Activated CD4-positive, alpha-beta memory T cell treated with anti-CD3 and anti-CD28 coated beads, Interleukin-2, amount 10 ng/mL, durations not matched to agents 7 days and 5 days (primary cell): ENCODE measurements at regions of chr13 and their contacts with region 1.

Region 1: DNA sequence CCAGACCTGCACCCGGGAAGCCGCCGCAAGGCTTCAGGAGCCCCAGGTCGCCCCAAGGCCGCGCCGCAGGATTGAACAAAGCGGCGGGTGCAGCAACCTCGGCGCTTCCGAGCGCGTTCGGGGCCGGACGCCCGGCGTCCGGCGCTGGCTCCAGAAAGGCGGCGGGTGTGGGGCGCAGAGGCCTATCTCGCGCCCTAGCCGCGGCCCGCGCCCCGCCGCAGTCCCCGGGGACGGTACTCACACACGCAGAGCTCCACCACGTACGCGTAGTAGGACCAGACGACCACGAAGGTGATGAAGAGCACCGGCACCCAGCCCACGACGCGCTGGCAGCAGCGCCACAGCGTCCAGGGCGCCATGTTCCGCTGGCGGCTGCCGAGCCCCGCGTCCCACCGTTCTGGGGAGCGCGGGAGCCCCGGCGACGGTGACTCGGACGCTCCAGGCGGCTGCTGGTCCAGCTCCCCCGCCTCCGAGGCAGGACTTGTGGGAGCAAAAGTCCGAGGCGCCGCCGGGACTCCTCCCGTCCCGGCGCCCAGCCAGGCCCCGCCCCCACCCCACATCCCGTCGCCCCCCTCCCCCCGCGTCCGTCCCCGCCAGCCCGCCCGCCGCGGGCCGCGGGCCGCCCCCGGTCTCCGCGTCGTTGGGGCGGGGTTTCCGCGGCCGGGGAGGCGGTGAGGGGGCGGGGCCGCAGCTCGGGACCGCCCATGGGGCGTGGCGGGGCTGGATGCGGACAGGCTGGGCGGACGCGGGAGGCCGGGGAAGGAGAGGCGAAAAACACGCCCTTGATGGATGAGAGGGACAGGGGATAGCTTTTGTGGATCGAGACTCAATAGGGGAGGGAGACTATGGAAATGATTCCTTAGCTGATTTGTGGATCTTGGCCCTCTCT is at the start of gene ZDHHC20:
- DNase-seq: peak; percentile 91
- H3K4me3 Mint-ChIP-seq: peak within 1 kb of the TSS; percentile 85
- H3K27ac Mint-ChIP-seq: peak within 1 kb of the TSS; percentile 91
- H3K4me1 Mint-ChIP-seq: peaks cover 34% of the 10 kb centered on the region
- H3K27me3 Mint-ChIP-seq: no peaks in the 10 kb centered on the region
- total RNA-seq, gene ZDHHC20: 92.0 to 103 TPM

Region 2: GRCh38 chr13:21344662-21345176 is 114.3 kb before region 1 on chr13:
- CTCF ChIA-PET with region 1: no interaction called
- POLR2A ChIA-PET with region 1: interaction called, 10 read pairs
- DNase-seq: peak; percentile 64
- H3K4me3 Mint-ChIP-seq: peak overlapping the region; percentile 67
- H3K27ac Mint-ChIP-seq: peak overlapping the region; percentile 86
- H3K4me1 Mint-ChIP-seq: peaks cover 31% of the 10 kb centered on the region
- H3K27me3 Mint-ChIP-seq: no peaks in the 10 kb centered on the region

Region 3: DNA sequence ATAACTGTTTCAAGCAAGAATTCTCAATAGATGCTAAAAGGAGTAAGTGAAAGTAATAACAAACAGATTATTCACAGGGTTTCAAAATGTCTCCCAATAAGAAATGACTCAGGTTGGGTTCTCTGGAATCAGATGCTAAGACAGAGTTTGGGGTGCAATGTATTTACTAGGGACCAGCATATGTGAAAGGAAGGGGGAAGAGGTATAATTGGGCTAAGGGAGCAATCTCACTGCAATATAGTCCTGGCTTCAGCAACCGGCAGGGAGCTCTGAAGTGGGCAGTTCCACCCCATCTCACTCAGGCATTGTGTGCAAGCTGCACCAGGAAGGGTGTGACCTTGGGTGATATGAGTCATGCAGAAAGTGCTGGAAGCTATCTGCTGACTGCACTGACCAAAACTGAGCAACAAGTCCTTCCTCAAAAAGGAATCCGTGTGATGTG is 23.3 kb before region 1 on chr13:
- CTCF ChIA-PET with region 1: interaction called, 6 read pairs
- POLR2A ChIA-PET with region 1: interaction called, 47 read pairs
- DNase-seq: peak; percentile 75
- H3K4me3 Mint-ChIP-seq: peak overlapping the region; percentile 58
- H3K27ac Mint-ChIP-seq: peak overlapping the region; percentile 84
- H3K4me1 Mint-ChIP-seq: peaks cover 39% of the 10 kb centered on the region
- H3K27me3 Mint-ChIP-seq: no peaks in the 10 kb centered on the region